HEK293T (cell line): ENCODE measurements at regions of chr4 and their contacts with region 1.

Region 1: DNA sequence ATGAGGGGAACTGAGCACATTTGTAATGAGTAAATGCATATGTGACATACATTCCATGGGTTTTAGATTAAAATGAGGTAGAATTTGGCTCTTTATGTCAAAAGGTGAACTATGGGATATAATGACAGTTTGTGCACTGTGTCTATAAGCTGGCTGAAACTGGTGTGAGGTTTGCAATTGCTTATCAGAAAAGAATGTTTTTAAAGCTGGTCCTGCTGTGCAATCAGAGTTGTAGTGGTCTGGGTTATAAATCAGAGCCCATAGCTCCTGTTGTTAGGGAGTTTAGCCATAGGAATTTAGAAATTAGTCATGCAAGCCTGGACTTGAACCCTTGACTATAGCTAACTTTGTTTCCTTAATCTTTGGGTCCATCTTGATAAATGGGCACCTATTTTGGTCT is 23.1 kb upstream of the GATB start:
- DNase-seq: no peak

Region 2: DNA sequence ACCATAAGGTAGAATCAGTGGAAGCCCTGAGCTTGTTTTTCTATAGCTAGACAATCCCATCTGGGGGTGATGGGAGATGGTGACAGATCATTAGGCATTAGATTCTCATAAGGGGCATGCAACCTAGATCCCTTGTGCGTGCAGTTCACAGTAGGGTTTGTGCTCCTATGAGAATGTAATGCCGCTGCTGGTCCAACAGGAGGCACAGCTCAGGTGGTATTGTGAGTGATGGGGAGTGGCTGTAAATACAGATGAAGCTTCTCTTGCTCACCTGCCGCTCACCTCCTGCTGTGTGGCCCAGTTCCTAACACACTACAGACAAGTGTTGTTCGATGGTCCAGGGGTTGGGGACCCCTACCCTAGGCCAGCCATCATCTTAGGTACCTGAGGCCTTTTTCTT is 17.2 kb before region 1 on chr4:
- CTCF ChIA-PET with region 1: no interaction called
- POLR2A ChIA-PET with region 1: no interaction called
- DNase-seq: no peak

Region 3: GRCh38 chr4:151801547-151802516 is 18.0 kb after region 1 on chr4:
- CTCF ChIA-PET with region 1: interaction called, 13 read pairs
- POLR2A ChIA-PET with region 1: no interaction called
- DNase-seq: peak; percentile 72